ENCODE measurements at regions of chr5 and their contacts with region 1.

Region 1: GRCh38 chr5:165928971-165929370 is 2362.5 kb upstream of the WWC1 start:
- DNase-seq: no peak
- H3K27ac ChIP-seq: no peak overlapping the region
- CTCF ChIP-seq: no peak

Region 2: DNA sequence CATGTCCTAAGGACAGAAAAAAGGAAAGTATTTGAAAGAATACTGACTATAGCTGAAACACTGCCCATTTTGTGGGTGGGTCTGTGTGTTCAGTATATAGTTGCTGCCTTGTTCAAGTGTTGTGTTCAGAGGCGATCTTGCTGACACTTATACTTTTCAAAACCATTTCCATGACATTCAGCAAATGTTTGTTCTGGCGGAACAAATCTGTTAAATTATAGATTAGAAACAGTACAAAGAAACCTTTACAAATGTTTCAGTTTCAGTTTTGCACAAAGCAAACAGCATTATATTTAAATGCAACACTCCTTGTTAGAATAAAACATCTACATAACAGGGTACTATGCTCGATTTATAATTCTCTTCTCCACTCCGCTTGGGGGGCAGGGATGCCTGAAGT is 147.2 kb before region 1 on chr5:
- CTCF ChIA-PET with region 1: no interaction called
- POLR2A ChIA-PET with region 1: no interaction called
- DNase-seq: no peak
- H3K27ac ChIP-seq: no peak overlapping the region
- CTCF ChIP-seq: no peak

Region 3: DNA sequence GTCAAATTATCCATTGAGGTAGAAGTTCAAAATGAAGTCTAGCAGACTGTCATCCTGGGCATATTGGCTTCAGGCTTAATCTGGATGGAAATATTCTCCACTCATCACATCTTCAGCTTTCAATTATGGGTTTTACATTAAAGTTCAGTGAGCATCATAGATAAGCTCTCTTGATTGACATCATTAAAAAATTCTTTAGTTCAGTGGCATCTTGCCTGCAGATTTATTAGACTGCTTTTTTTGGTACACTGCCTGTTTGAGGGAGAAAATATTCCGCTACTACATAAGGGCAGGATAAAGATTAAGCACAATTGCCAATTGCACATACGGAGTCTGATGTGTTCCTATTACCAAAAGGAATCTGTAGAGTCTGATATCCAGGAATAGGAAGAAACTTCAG is 69.7 kb before region 1 on chr5:
- CTCF ChIA-PET with region 1: no interaction called
- POLR2A ChIA-PET with region 1: no interaction called
- DNase-seq: no peak
- H3K27ac ChIP-seq: no peak overlapping the region
- CTCF ChIP-seq: no peak

Region 4: GRCh38 chr5:165940541-165940940 is 11.6 kb after region 1 on chr5:
- CTCF ChIA-PET with region 1: interaction called, 8 read pairs
- POLR2A ChIA-PET with region 1: interaction called, 13 read pairs
- DNase-seq: no peak
- H3K27ac ChIP-seq: no peak overlapping the region
- CTCF ChIP-seq: no peak